Naive thymus-derived CD4-positive, alpha-beta T cell (primary cell): ENCODE measurements at regions of chr15 and their contacts with region 1.

Region 1: GRCh38 chr15:34304613-34305012 is 33.0 kb downstream of the SLC12A6 start:
- DNase-seq: no peak
- ATAC-seq: no peak
- H3K4me3 ChIP-seq: no peak overlapping the region
- H3K4me3 Mint-ChIP-seq: peak overlapping the region in 2 of 10 donors; percentile 16 to 20
- H3K27ac ChIP-seq: no peak overlapping the region
- H3K27ac Mint-ChIP-seq: peak overlapping the region in 2 of 9 donors; percentile 29 to 55
- H3K4me1 ChIP-seq: peaks cover 0 to 7% of the 10 kb centered on the region in 2 donors
- H3K4me1 Mint-ChIP-seq: peaks cover 15 to 97% (median 79%) of the 10 kb centered on the region in 7 donors
- H3K27me3 ChIP-seq: no peaks in the 10 kb centered on the region
- H3K27me3 Mint-ChIP-seq: no peaks in the 10 kb centered on the region

Region 2: DNA sequence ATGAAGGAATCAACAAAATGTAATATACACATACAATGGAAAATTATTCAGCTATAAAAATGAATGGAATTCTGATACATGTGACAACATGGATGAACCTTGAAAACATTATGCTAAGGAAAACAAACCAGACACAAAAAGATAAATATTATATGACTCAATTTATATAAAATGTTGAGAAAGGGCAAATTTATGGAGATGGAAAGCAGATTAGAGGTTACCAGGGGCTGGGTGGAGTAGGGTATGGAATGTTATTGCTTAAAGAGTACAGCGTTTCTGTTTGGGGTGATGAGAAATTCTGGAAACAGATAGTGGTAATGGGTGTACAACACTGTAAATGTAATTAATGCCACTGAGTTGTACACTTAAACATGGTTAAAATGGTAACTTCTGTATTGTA is 28.9 kb before region 1 on chr15:
- CTCF ChIA-PET with region 1: no interaction called
- POLR2A ChIA-PET with region 1: no interaction called
- intact Hi-C with region 1: loop called in 1 of 2 experiments (anchors 2 kb)
- DNase-seq: no peak
- ATAC-seq: no peak
- H3K4me3 ChIP-seq: no peak overlapping the region
- H3K4me3 Mint-ChIP-seq: no peak overlapping the region
- H3K27ac ChIP-seq: no peak overlapping the region
- H3K27ac Mint-ChIP-seq: peak overlapping the region in 3 of 9 donors; percentile 15 to 63 (median 17)
- H3K4me1 ChIP-seq: no peaks in the 10 kb centered on the region
- H3K4me1 Mint-ChIP-seq: peaks cover 0 to 55% (median 34%) of the 10 kb centered on the region in 7 donors
- H3K27me3 ChIP-seq: no peaks in the 10 kb centered on the region
- H3K27me3 Mint-ChIP-seq: no peaks in the 10 kb centered on the region

Region 3: GRCh38 chr15:34292621-34293020 is 12.0 kb before region 1 on chr15:
- CTCF ChIA-PET with region 1: no interaction called
- POLR2A ChIA-PET with region 1: interaction called, 5 read pairs
- intact Hi-C with region 1: loop called in 1 of 2 experiments (anchors 2 kb)
- DNase-seq: no peak
- ATAC-seq: no peak
- H3K4me3 ChIP-seq: no peak overlapping the region
- H3K4me3 Mint-ChIP-seq: no peak overlapping the region
- H3K27ac ChIP-seq: no peak overlapping the region
- H3K27ac Mint-ChIP-seq: peak overlapping the region in 2 of 9 donors; percentile 34 to 58
- H3K4me1 ChIP-seq: peaks cover 0 to 4% of the 10 kb centered on the region in 2 donors
- H3K4me1 Mint-ChIP-seq: peaks cover 6 to 66% (median 52%) of the 10 kb centered on the region in 7 donors
- H3K27me3 ChIP-seq: no peaks in the 10 kb centered on the region
- H3K27me3 Mint-ChIP-seq: no peaks in the 10 kb centered on the region

Region 4: DNA sequence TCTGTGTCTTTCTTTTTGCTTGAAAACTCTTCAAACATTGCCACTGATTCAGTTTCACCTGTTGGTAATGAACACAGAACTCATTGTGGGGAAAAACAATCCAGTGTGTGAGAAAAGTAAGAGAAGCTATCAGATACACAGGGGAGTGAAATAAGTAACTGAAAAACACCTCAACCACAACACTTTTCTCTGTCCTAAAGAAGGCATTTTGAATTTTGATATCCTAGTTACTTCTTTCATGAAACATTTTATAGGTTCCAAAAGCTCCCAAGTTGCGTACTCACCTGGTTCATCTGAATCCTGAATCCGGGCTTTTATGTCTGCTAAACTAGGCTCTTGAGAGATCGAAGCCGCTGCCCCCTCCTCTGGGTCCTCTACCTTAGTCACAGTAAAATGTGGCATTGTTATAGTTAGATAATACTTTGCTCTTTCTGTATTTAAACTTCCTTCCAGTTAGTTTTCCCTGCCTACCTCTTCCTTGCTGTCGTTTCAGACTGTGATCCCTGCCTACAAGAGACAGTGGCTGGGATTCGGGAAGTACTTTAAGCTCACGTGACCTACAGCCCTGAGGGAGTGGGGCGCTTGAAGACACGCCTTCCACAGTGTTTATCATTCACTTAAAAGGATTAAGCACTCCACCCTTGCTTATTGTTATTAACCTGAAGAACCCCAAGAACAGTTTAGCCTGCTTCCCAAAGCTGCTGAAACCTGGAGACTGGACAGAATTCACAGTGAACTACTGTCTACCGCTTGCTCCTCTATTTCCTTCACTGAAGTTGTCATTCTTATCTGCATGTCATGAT is 13.9 kb after region 1 on chr15:
- CTCF ChIA-PET with region 1: no interaction called
- POLR2A ChIA-PET with region 1: interaction called, 3 read pairs
- intact Hi-C with region 1: loop called in 1 of 2 experiments (anchors 2 kb)
- DNase-seq: peak in 4 of 9 donors; percentile 29 to 38 (median 36)
- ATAC-seq: peak; percentile 83
- H3K4me3 ChIP-seq: peak overlapping the region; percentile 71
- H3K4me3 Mint-ChIP-seq: peak overlapping the region; percentile 92 to 99 (median 97)
- H3K27ac ChIP-seq: peak overlapping the region; percentile 76
- H3K27ac Mint-ChIP-seq: peak overlapping the region; percentile 91 to 99 (median 95)
- H3K4me1 ChIP-seq: peaks cover 0 to 24% of the 10 kb centered on the region in 2 donors
- H3K4me1 Mint-ChIP-seq: peaks cover 36 to 85% (median 62%) of the 10 kb centered on the region in 7 donors
- H3K27me3 ChIP-seq: no peaks in the 10 kb centered on the region
- H3K27me3 Mint-ChIP-seq: no peaks in the 10 kb centered on the region